ENCODE measurements at regions of chr5 and their contacts with region 1.

Region 1: DNA sequence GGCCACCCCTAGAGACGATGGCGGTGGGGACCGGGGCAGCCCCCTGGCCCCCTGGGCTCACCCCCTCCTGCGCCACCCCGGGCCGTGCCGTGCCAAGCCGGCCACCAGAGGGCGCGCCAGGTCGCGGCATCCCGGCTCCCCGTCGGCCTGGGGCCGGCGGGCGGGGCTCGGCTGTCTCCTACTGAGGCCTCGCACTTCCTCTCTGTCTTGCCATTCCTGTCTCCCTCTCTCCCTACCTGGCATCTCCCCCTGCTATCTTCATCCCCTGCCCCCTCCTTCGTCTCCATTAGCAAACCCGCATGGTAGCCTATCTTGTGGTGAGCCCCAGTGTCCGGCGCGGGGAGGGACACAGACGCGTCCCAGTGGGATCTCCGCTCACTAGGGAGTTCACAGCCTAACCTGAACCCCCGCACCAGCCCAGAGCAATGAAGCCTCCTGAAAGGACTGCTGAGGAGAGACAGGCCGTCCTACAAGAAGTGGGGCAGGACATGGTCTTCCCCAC is 29.8 kb upstream of the FABP6 start:
- DNase-seq: peak; percentile 66 to 89 (median 79)
- ATAC-seq: peak; percentile 74 to 98 (median 92)
- H3K4me3 ChIP-seq: peak overlapping the region in 11 of 12 donors; percentile 22 to 57 (median 45)
- H3K27ac ChIP-seq: peak overlapping the region in 2 of 12 donors; percentile 24 to 38
- H3K4me1 ChIP-seq: peaks cover 0 to 25% (median 16%) of the 10 kb centered on the region in 12 donors
- H3K27me3 ChIP-seq: no peaks in the 10 kb centered on the region
- CTCF ChIP-seq: peak; percentile 85 to 98 (median 96)
- POLR2A ChIP-seq: no peak

Region 2: GRCh38 chr5:160382346-160382745 is 182.9 kb after region 1 on chr5:
- intact Hi-C with region 1: loop called in 2 of 10 experiments (anchors 5 kb)
- DNase-seq: no peak
- ATAC-seq: no peak
- H3K4me3 ChIP-seq: no peak overlapping the region
- H3K27ac ChIP-seq: no peak overlapping the region
- H3K4me1 ChIP-seq: peaks cover 0 to 12% (median 0%) of the 10 kb centered on the region in 12 donors
- H3K27me3 ChIP-seq: no peaks in the 10 kb centered on the region
- CTCF ChIP-seq: no peak
- POLR2A ChIP-seq: no peak

Region 3: DNA sequence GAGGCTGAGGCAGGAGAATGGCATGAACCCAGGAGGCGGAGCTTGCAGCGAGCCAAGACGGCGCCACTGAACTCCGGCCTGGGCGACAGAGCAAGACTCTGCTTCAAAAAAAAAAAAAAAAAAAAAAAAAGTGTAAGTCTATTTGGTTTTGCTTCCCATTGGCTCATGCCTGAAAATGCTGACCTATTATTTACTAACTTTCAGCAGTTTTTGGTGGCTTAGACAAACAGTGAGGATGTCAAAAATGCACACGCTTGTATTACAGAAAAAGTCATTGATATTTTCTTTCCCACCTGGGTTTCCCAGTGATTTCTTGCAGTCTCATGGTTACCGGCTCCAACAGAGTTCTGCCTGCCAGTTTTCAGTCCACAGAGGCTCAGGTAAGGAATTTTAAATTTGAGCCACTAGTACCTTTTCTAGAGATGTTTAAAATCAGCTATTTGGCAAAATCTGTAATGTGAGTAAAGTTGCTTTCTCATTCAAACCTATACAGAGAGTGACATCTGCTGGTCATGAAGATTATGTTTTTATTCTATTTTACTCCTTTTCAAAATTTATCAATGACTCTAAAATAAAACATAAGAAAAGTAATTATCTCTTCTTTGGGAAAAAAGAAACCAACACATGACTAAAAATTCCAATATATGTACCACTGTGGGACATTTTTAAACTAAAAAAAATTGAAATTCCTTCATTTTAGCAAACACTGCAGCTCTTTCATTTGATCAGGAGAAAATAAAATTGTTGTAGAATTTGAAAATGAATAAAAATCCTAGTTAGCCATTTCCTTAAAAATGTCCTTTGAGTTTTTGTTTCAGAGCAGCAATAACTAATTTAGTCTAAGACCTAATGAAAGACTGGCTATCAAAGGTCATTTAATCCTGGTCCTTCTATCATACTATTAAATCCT is 191.6 kb after region 1 on chr5:
- intact Hi-C with region 1: loop called in 3 of 10 experiments (anchors 5 kb)
- DNase-seq: no peak
- ATAC-seq: peak in 1 of 4 donors; percentile 30
- H3K4me3 ChIP-seq: no peak overlapping the region
- H3K27ac ChIP-seq: no peak overlapping the region
- H3K4me1 ChIP-seq: peaks cover 0 to 14% (median 0%) of the 10 kb centered on the region in 12 donors
- H3K27me3 ChIP-seq: no peaks in the 10 kb centered on the region
- CTCF ChIP-seq: peak; percentile 31 to 67 (median 53)
- POLR2A ChIP-seq: no peak